ENCODE measurements at regions of chr10 and their contacts with region 1.

Region 1: DNA sequence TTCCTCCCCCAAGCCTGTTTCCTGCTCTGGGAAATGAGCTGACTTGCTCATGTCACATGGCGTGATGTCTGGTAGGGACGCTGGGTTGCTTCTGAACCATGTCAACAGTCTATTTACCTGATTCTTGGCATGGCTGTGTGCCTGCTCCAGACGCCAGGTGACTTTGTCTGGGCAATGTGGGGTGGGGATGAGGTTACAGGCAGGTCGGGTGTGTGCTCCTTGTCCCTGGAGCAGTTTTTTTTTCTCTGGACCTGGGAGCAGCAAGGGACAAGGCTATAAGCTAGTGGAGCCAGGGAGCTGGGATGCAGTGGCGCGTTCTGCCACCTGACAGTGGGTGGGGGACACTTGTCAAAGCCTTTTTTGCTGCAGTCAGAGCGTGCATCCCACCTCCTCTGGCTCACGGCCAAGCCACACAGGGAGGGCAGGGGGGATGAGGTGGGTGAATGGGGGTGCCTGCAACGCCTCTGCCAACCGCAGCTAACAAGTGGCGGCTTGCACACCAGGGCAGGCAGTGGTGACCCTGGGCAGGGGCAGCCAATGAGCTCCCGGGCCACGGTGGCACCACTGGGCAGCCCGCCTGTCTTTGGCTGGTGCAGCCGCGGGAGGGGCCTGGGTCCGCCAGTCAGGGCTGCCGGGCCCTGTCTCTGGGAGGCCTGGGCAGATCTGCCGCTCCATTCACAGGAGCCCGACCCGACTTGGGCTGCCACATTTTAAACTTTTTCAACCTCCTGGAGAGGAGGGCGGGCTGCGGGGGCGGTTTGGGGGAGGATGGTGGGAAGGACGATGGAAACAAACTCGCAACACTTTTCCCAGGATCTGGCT is 22.9 kb downstream of the DNAJB12 start:
- DNase-seq: peak; percentile 93
- ATAC-seq: peak; percentile 79
- H3K4me3 ChIP-seq: peak overlapping the region in 4 of 5 experiments; percentile 31 to 38 (median 35)
- H3K4me3 Mint-ChIP-seq: peak overlapping the region; percentile 76
- H3K27ac ChIP-seq: peak overlapping the region; percentile 83 to 86
- H3K27ac Mint-ChIP-seq: peak overlapping the region; percentile 96
- H3K4me1 ChIP-seq: peaks cover 84 to 100% of the 10 kb centered on the region in 2 donors
- H3K4me1 Mint-ChIP-seq: peaks cover 90% of the 10 kb centered on the region
- H3K27me3 ChIP-seq: no peaks in the 10 kb centered on the region
- H3K27me3 Mint-ChIP-seq: no peaks in the 10 kb centered on the region
- CTCF ChIP-seq: peak; percentile 55

Region 2: GRCh38 chr10:72097448-72098300 is 234.1 kb before region 1 on chr10:
- CTCF ChIA-PET with region 1: no interaction called
- POLR2A ChIA-PET with region 1: no interaction called
- intact Hi-C with region 1: no loop called
- DNase-seq: no peak
- ATAC-seq: no peak
- H3K4me3 ChIP-seq: no peak overlapping the region
- H3K4me3 Mint-ChIP-seq: no peak overlapping the region
- H3K27ac ChIP-seq: no peak overlapping the region
- H3K27ac Mint-ChIP-seq: no peak overlapping the region
- H3K4me1 ChIP-seq: no peaks in the 10 kb centered on the region
- H3K4me1 Mint-ChIP-seq: no peaks in the 10 kb centered on the region
- H3K27me3 ChIP-seq: no peaks in the 10 kb centered on the region
- H3K27me3 Mint-ChIP-seq: no peaks in the 10 kb centered on the region
- CTCF ChIP-seq: no peak

Region 3: GRCh38 chr10:72126184-72126871 is 205.5 kb before region 1 on chr10:
- CTCF ChIA-PET with region 1: interaction called, 333 read pairs
- POLR2A ChIA-PET with region 1: interaction called, 3 read pairs
- intact Hi-C with region 1: loop called (anchors 1 kb)
- DNase-seq: peak; percentile 53
- ATAC-seq: no peak
- H3K4me3 ChIP-seq: no peak overlapping the region
- H3K4me3 Mint-ChIP-seq: no peak overlapping the region
- H3K27ac ChIP-seq: no peak overlapping the region
- H3K27ac Mint-ChIP-seq: no peak overlapping the region
- H3K4me1 ChIP-seq: no peaks in the 10 kb centered on the region
- H3K4me1 Mint-ChIP-seq: no peaks in the 10 kb centered on the region
- H3K27me3 ChIP-seq: no peaks in the 10 kb centered on the region
- H3K27me3 Mint-ChIP-seq: no peaks in the 10 kb centered on the region
- CTCF ChIP-seq: peak; percentile 25

Region 4: DNA sequence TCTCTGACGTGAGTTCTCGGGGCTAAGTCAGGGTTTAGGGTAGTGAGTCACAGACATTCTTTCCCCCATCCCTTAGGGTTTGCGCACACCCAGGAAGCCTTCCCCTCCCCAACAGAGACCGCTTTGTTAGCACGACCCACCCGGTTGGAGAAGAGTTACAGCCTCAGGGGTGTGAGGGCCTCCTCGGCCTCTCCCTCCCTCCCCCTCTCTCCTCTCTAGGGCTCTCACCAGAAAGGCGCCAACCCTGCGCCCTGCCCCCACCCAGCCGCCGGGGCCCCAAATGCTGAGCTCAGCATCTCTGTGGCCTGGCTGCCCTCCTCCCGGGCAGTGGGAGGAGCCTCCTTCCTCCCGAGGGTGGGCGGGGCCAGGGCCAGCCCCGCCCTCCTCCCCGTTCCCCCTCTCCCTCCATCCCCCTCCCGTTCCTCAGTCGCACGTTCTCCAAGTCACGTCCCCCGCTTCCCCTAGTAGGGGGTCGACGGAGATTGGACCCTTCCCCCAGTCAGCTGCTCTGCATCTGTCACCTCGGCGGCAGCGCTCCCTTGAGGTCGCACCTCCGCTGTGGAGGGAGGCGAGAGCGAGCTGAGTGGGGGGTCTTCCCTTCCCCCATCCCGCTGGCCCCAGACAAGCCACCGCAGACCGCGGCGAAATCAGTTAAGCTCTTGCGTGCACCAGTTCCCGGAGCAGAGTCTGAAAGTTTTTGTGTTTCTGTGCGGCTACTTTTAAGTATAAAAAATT is 71.1 kb before region 1 on chr10:
- CTCF ChIA-PET with region 1: interaction called, 48 read pairs
- POLR2A ChIA-PET with region 1: interaction called, 5 read pairs
- intact Hi-C with region 1: no loop called
- DNase-seq: peak; percentile 81
- ATAC-seq: peak; percentile 81
- H3K4me3 ChIP-seq: peak overlapping the region; percentile 51 to 80 (median 73)
- H3K4me3 Mint-ChIP-seq: peak overlapping the region; percentile 94
- H3K27ac ChIP-seq: peak overlapping the region; percentile 47 to 67
- H3K27ac Mint-ChIP-seq: peak overlapping the region; percentile 89
- H3K4me1 ChIP-seq: peaks cover 48 to 68% of the 10 kb centered on the region in 2 donors
- H3K4me1 Mint-ChIP-seq: peaks cover 51% of the 10 kb centered on the region
- H3K27me3 ChIP-seq: no peaks in the 10 kb centered on the region
- H3K27me3 Mint-ChIP-seq: no peaks in the 10 kb centered on the region
- CTCF ChIP-seq: no peak

Region 5: DNA sequence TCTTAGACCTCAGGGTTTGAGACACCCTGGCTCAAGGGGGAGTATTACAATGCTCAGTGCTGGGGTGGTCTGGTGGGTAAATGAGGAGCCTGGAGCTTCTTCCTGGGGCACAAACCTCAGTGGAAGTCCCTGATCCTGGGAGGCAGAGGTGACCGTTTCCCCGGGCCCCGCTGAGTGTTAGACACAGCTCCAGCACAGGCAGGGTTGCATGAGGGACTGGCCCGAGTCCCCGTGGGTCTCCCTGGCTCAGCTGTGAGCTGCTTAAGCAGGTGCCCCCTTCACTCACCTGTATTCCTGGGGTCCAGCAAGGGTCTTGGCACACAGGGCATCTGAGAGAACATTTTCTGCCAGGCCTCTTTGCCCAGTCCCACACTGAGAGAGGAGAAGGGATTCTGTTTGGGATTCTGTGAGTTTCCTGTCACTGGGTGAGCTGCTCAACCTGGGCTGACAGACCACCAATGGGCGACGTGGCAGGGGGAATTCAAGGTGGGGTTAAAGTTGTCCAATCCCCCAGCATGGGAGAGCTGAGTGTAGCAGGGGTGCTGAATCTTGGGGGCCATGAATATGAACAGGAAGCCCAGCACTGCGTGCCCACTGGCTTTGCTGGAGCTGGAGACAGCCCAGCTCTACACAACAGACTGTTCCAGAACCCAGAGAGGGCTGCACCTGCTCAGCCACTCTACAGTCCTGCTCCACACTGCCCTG is 28.2 kb before region 1 on chr10:
- CTCF ChIA-PET with region 1: interaction called, 27 read pairs
- POLR2A ChIA-PET with region 1: interaction called, 5 read pairs
- intact Hi-C with region 1: no loop called
- DNase-seq: no peak
- ATAC-seq: no peak
- H3K4me3 ChIP-seq: no peak overlapping the region
- H3K4me3 Mint-ChIP-seq: no peak overlapping the region
- H3K27ac ChIP-seq: no peak overlapping the region
- H3K27ac Mint-ChIP-seq: peak overlapping the region; percentile 70
- H3K4me1 ChIP-seq: peaks cover 12 to 26% of the 10 kb centered on the region in 2 donors
- H3K4me1 Mint-ChIP-seq: peaks cover 45% of the 10 kb centered on the region
- H3K27me3 ChIP-seq: no peaks in the 10 kb centered on the region
- H3K27me3 Mint-ChIP-seq: no peaks in the 10 kb centered on the region
- CTCF ChIP-seq: no peak

Region 6: GRCh38 chr10:72449915-72450441 is 118.2 kb after region 1 on chr10:
- CTCF ChIA-PET with region 1: no interaction called
- POLR2A ChIA-PET with region 1: no interaction called
- intact Hi-C with region 1: no loop called
- DNase-seq: no peak
- ATAC-seq: no peak
- H3K4me3 ChIP-seq: no peak overlapping the region
- H3K4me3 Mint-ChIP-seq: no peak overlapping the region
- H3K27ac ChIP-seq: no peak overlapping the region
- H3K27ac Mint-ChIP-seq: no peak overlapping the region
- H3K4me1 ChIP-seq: no peaks in the 10 kb centered on the region
- H3K4me1 Mint-ChIP-seq: no peaks in the 10 kb centered on the region
- H3K27me3 ChIP-seq: no peaks in the 10 kb centered on the region
- H3K27me3 Mint-ChIP-seq: no peaks in the 10 kb centered on the region
- CTCF ChIP-seq: no peak

Measured in B cell (primary cell).